B cell (primary cell): ENCODE measurements at regions of chr5 and their contacts with region 1.

Region 1: DNA sequence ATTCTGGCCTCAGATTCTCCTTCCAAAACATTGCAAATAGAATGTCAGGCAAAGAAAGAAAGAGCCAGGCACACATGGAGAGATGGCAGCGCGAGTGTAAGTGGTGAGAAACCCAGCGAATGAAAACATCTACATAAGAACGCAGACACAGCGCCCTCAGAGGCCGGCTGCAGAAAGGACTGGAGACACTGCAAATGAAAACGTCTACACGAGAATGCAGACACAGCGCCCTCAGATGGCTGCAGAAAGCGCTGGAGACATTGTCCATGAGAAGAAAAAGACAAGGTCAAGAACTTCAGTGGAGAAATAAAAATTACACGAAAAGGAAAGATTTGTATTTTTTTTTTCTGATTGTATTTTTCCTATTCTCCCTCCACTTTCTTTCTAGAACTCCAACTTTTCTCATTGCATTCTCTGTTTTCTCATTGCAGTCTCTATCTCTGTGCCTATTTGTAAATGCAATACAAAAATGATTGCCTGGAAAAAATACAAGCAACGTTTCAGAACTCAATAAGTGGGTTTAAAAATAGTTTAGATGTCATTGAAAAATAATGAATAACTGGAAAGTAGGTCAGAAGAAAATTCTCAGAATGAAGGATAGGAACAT is 117.9 kb upstream of the LPCAT1 start:
- DNase-seq: peak; percentile 82
- ATAC-seq: peak; percentile 80
- H3K4me3 ChIP-seq: no peak overlapping the region
- H3K4me3 Mint-ChIP-seq: no peak overlapping the region
- H3K27ac ChIP-seq: no peak overlapping the region
- H3K27ac Mint-ChIP-seq: no peak overlapping the region
- H3K4me1 ChIP-seq: peaks cover 10 to 14% of the 10 kb centered on the region in 2 donors
- H3K4me1 Mint-ChIP-seq: peaks cover 12% of the 10 kb centered on the region
- H3K27me3 ChIP-seq: peaks cover 0 to 32% (median 18%) of the 10 kb centered on the region in 4 experiments
- H3K27me3 Mint-ChIP-seq: peaks cover 29% of the 10 kb centered on the region
- CTCF ChIP-seq: peak; percentile 99

Region 2: GRCh38 chr5:923281-923873 is 718.3 kb before region 1 on chr5:
- CTCF ChIA-PET with region 1: interaction called, 17 read pairs
- POLR2A ChIA-PET with region 1: no interaction called
- intact Hi-C with region 1: no loop called
- DNase-seq: peak; percentile 73
- ATAC-seq: peak; percentile 80
- H3K4me3 ChIP-seq: no peak overlapping the region
- H3K4me3 Mint-ChIP-seq: no peak overlapping the region
- H3K27ac ChIP-seq: no peak overlapping the region
- H3K27ac Mint-ChIP-seq: no peak overlapping the region
- H3K4me1 ChIP-seq: peaks cover 10 to 15% of the 10 kb centered on the region in 2 donors
- H3K4me1 Mint-ChIP-seq: peaks cover 3% of the 10 kb centered on the region
- H3K27me3 ChIP-seq: peaks cover 0 to 20% (median 10%) of the 10 kb centered on the region in 4 experiments
- H3K27me3 Mint-ChIP-seq: peaks cover 27% of the 10 kb centered on the region
- CTCF ChIP-seq: peak; percentile 80

Region 3: GRCh38 chr5:956941-957747 is 684.5 kb before region 1 on chr5:
- CTCF ChIA-PET with region 1: no interaction called
- POLR2A ChIA-PET with region 1: no interaction called
- intact Hi-C with region 1: no loop called
- DNase-seq: no peak
- ATAC-seq: no peak
- H3K4me3 ChIP-seq: no peak overlapping the region
- H3K4me3 Mint-ChIP-seq: no peak overlapping the region
- H3K27ac ChIP-seq: no peak overlapping the region
- H3K27ac Mint-ChIP-seq: no peak overlapping the region
- H3K4me1 ChIP-seq: no peaks in the 10 kb centered on the region
- H3K4me1 Mint-ChIP-seq: no peaks in the 10 kb centered on the region
- H3K27me3 ChIP-seq: peaks cover 0 to 38% (median 3%) of the 10 kb centered on the region in 4 experiments
- H3K27me3 Mint-ChIP-seq: peaks cover 53% of the 10 kb centered on the region
- CTCF ChIP-seq: no peak

Region 4: GRCh38 chr5:1174122-1174936 is 467.3 kb before region 1 on chr5:
- CTCF ChIA-PET with region 1: interaction called, 84 read pairs
- POLR2A ChIA-PET with region 1: no interaction called
- intact Hi-C with region 1: no loop called
- DNase-seq: peak; percentile 59
- ATAC-seq: peak; percentile 51
- H3K4me3 ChIP-seq: no peak overlapping the region
- H3K4me3 Mint-ChIP-seq: no peak overlapping the region
- H3K27ac ChIP-seq: no peak overlapping the region
- H3K27ac Mint-ChIP-seq: no peak overlapping the region
- H3K4me1 ChIP-seq: no peaks in the 10 kb centered on the region
- H3K4me1 Mint-ChIP-seq: peaks cover 2% of the 10 kb centered on the region
- H3K27me3 ChIP-seq: peaks cover 0 to 10% (median 1%) of the 10 kb centered on the region in 4 experiments
- H3K27me3 Mint-ChIP-seq: no peaks in the 10 kb centered on the region
- CTCF ChIP-seq: peak; percentile 69

Region 5: DNA sequence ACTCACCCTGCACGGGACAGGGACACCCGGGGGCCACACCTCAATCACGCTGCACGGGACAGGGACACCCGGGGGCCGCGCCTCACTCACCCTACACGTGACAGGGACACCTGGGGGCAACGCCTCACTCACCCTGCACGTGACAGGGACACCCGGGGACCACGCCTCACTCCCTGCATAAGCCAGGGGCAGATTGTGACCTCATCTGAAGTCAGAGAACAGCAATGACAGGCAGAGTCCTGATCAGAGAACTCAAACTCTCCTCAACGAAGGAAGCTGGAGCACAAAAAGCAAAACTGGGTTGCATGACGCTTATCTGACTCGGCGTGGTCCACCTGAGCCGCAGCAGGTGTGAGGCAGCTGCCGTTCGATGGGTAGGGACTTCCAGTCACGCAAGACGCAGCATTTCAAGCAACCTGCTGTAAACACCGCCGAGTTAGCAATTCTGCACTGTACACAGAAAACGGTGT is 350.0 kb before region 1 on chr5:
- CTCF ChIA-PET with region 1: no interaction called
- POLR2A ChIA-PET with region 1: no interaction called
- intact Hi-C with region 1: no loop called
- DNase-seq: peak; percentile 3
- ATAC-seq: no peak
- H3K4me3 ChIP-seq: no peak overlapping the region
- H3K4me3 Mint-ChIP-seq: no peak overlapping the region
- H3K27ac ChIP-seq: no peak overlapping the region
- H3K27ac Mint-ChIP-seq: no peak overlapping the region
- H3K4me1 ChIP-seq: peaks cover 11% of the 10 kb centered on the region in 2 donors
- H3K4me1 Mint-ChIP-seq: peaks cover 9% of the 10 kb centered on the region
- H3K27me3 ChIP-seq: peaks cover 0 to 10% (median 0%) of the 10 kb centered on the region in 4 experiments
- H3K27me3 Mint-ChIP-seq: peaks cover 11% of the 10 kb centered on the region
- CTCF ChIP-seq: no peak

Region 6: DNA sequence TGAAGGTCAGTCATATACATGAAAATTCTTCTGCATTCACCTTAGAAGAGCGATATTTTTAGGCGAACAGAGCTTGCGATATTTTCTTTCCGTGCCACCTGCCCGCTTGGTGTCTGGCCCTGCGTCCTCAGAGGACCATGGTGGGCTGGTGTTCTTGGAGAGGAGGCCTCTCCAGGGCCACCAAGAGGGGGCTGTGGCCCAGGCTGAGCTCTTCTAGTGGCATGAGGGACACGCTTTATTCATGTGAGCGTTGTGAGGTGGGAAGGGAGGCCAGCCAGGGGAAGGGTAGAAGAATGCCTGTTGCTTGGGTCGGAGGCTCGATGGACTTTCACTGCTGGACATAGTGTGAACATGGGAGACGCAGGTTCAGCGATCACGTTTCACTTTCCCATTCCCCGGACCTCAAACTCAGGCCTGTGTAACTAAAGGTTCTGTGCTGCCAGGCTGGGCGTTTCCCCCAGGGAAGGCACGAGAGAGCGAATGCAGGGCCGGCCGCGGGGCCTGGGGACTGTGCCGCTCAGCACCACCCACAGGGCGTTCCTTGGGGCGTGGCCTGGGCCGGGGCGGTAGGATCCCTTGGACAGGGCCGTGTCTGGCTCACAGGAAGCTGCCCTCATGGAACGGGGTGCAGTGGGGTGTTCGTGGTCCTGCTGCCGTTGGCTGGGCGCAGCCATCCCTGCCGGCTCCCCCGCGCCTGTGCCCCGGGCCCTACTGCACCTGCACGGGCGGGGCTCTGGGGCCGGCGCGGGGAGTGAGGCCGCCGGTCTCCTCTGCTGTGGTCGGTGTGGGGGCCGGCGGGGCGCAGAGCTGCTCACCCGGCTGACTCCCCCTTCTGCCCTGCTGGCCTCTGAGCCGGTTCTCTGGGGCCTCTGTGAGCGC is 256.0 kb before region 1 on chr5:
- CTCF ChIA-PET with region 1: interaction called, 15 read pairs
- POLR2A ChIA-PET with region 1: no interaction called
- intact Hi-C with region 1: loop called (anchors 1 kb)
- DNase-seq: peak; percentile 88
- ATAC-seq: peak; percentile 91
- H3K4me3 ChIP-seq: peak overlapping the region; percentile 22 to 78 (median 62)
- H3K4me3 Mint-ChIP-seq: peak overlapping the region; percentile 96
- H3K27ac ChIP-seq: peak overlapping the region; percentile 83 to 92
- H3K27ac Mint-ChIP-seq: peak overlapping the region; percentile 100
- H3K4me1 ChIP-seq: peaks cover 15 to 21% of the 10 kb centered on the region in 2 donors
- H3K4me1 Mint-ChIP-seq: peaks cover 30% of the 10 kb centered on the region
- H3K27me3 ChIP-seq: peaks cover 0 to 3% (median 0%) of the 10 kb centered on the region in 4 experiments
- H3K27me3 Mint-ChIP-seq: peaks cover 13% of the 10 kb centered on the region
- CTCF ChIP-seq: no peak

Region 7: DNA sequence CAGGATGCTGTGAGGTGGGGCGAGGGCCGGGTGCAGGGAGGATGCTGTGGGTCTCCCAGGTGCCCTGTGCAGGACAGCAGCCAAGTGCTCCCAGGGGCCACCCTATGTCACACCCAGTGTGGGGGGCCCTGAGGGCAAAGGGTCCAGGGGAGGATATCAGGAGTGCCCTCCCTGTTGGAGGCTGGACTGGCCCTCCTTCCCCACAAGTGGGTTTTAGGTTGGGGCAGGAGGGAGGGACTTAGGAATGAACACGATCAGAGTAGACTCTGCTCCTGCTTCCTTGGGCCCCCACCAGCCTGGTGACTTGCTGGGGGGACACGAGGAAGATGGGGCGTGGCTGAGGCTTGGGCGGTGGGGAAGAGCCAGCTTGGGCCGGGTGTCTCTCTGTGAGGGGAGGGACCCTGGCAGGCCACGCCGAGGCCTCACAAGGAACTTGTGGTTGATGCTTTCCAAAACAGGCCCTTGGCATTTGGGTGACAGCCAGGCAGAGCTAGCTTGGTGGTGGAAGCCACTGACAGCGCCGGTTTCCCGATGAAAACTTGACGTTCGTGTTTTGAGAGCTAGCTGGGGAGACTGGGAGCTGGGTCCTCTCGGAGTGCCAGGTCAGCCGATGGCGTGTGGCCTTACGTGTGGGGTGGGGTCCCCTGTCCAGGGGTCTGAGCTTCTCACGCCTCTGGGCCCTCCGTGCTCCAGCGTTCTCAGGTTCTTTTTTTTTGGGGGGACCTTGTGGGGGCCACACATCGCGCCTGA is 11.1 kb after region 1 on chr5:
- CTCF ChIA-PET with region 1: interaction called, 24 read pairs
- POLR2A ChIA-PET with region 1: no interaction called
- intact Hi-C with region 1: no loop called
- DNase-seq: no peak
- ATAC-seq: no peak
- H3K4me3 ChIP-seq: peak overlapping the region in 1 of 5 experiments; percentile 39
- H3K4me3 Mint-ChIP-seq: peak overlapping the region; percentile 84
- H3K27ac ChIP-seq: no peak overlapping the region
- H3K27ac Mint-ChIP-seq: peak overlapping the region; percentile 32
- H3K4me1 ChIP-seq: peaks cover 22 to 23% of the 10 kb centered on the region in 2 donors
- H3K4me1 Mint-ChIP-seq: peaks cover 28% of the 10 kb centered on the region
- H3K27me3 ChIP-seq: peaks cover 0 to 24% (median 8%) of the 10 kb centered on the region in 4 experiments
- H3K27me3 Mint-ChIP-seq: peaks cover 11% of the 10 kb centered on the region
- CTCF ChIP-seq: no peak

Region 8: DNA sequence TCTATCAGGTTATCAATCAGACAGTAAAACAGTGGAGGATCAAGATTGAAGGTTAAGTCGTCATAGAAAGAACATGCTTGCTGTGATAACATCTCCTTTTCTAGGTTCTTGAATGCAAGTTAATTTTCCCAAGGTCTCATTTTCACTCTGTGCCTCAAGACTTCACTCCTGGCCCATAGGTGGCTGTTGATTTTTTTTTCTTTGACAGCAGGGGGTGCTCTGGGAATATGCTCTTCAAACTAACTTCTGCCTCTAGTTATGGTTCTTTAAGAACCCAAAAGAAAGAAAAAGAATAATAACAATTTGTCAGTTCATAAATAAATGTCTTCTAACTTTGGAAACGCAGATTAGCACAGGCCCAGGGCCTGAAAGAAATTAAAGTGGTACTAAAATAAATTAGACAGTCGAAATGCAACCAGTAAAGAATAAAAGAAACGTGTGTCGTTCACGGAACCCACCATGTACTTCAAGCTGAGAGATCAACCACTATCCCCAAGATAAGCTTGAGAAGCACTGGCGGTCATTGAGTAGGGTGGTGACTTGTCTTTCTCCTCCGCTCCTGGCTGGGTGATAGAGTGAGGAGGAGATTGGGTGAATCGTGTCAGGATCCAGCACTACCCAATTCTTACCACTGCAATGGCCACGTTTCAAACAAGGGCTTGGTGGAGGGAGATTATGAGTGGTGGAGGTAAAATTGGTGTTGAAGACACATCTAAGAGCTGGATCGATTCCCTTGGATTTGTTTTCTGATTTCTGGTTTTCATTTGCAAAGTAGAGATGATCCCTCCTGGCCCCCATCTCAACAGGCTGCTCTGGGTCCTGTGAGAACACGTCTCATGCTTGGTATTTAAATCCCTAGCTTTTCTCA is 334.5 kb after region 1 on chr5:
- CTCF ChIA-PET with region 1: no interaction called
- POLR2A ChIA-PET with region 1: no interaction called
- intact Hi-C with region 1: no loop called
- DNase-seq: no peak
- ATAC-seq: no peak
- H3K4me3 ChIP-seq: no peak overlapping the region
- H3K4me3 Mint-ChIP-seq: no peak overlapping the region
- H3K27ac ChIP-seq: no peak overlapping the region
- H3K27ac Mint-ChIP-seq: no peak overlapping the region
- H3K4me1 ChIP-seq: no peaks in the 10 kb centered on the region
- H3K4me1 Mint-ChIP-seq: no peaks in the 10 kb centered on the region
- H3K27me3 ChIP-seq: no peaks in the 10 kb centered on the region
- H3K27me3 Mint-ChIP-seq: peaks cover 6% of the 10 kb centered on the region
- CTCF ChIP-seq: no peak